CD14-positive monocyte (primary cell): ENCODE measurements at regions of chrX and their contacts with region 1.

Region 1: DNA sequence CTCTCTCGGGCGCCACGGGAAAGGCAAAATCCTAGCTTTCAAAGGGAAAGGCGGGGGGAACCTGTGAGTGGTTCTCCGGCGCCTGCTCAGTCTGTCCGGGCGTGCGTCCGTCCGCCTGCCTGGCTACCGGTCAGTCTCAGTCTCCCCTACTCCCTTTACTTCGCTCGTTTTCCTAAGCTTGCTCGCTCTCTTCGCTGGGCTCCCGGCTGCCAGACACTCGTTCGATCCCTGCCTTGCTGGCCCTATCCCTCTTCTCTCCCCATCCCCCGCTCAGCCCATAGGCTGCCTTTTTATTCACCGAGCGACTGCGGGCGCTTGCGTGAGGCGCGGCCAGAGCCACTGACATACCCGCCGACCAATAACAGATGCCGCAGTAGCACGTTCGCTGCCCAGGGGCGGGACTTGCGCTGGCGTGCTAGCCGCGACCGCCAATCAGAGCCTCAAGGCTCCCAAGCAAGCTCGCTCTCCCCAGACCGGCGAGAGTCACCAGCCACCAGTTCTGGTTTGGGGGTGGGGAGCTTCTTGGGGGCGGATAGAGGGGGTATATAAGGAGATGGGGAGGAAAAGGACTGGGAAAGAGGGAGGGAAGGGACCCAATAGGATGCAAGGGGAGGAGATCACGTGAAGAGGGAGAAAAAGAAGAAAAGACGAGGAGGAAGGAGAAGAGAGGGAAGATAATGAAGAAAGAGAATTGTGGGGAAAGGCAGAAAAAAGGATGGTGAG is 30.0 kb downstream of the ARHGEF9 start:
- DNase-seq: peak; percentile 78 to 85 (median 84)
- H3K4me3 ChIP-seq: peak overlapping the region; percentile 55 to 92 (median 81)
- H3K4me3 Mint-ChIP-seq: peak overlapping the region; percentile 94 to 97
- H3K27ac ChIP-seq: peak overlapping the region; percentile 75 to 84
- H3K27ac Mint-ChIP-seq: peak overlapping the region; percentile 87 to 96 (median 92)
- H3K4me1 ChIP-seq: peaks cover 9 to 11% of the 10 kb centered on the region in 2 donors
- H3K4me1 Mint-ChIP-seq: peaks cover 21% of the 10 kb centered on the region
- H3K27me3 ChIP-seq: no peaks in the 10 kb centered on the region
- H3K27me3 Mint-ChIP-seq: peaks cover 0 to 5% (median 0%) of the 10 kb centered on the region in 3 donors
- CTCF ChIP-seq: no peak

Region 2: GRCh38 chrX:64205735-64206491 is 450.9 kb after region 1 on chrX:
- intact Hi-C with region 1: loop called in 1 of 2 experiments (anchors 10 kb)
- DNase-seq: peak; percentile 81 to 84 (median 84)
- H3K4me3 ChIP-seq: peak overlapping the region; percentile 57 to 80 (median 76)
- H3K4me3 Mint-ChIP-seq: peak overlapping the region; percentile 88 to 90
- H3K27ac ChIP-seq: peak overlapping the region; percentile 85 to 95
- H3K27ac Mint-ChIP-seq: peak overlapping the region; percentile 81 to 95 (median 93)
- H3K4me1 ChIP-seq: peaks cover 17 to 18% of the 10 kb centered on the region in 2 donors
- H3K4me1 Mint-ChIP-seq: peaks cover 20% of the 10 kb centered on the region
- H3K27me3 ChIP-seq: no peaks in the 10 kb centered on the region
- H3K27me3 Mint-ChIP-seq: peaks cover 0 to 6% (median 2%) of the 10 kb centered on the region in 3 donors
- CTCF ChIP-seq: no peak

Region 3: GRCh38 chrX:65534450-65535292 is 1779.7 kb after region 1 on chrX and contains the start of gene LAS1L:
- intact Hi-C with region 1: loop called in 1 of 2 experiments (anchors 10 kb)
- DNase-seq: peak; percentile 90 to 92 (median 91)
- H3K4me3 ChIP-seq: peak within 1 kb of the TSS; percentile 50 to 84 (median 80)
- H3K4me3 Mint-ChIP-seq: peak within 1 kb of the TSS; percentile 98 to 100
- H3K27ac ChIP-seq: peak within 1 kb of the TSS; percentile 46 to 50
- H3K27ac Mint-ChIP-seq: peak within 1 kb of the TSS; percentile 86 to 93 (median 91)
- H3K4me1 ChIP-seq: peaks cover 13 to 15% of the 10 kb centered on the region in 2 donors
- H3K4me1 Mint-ChIP-seq: peaks cover 13% of the 10 kb centered on the region
- H3K27me3 ChIP-seq: no peaks in the 10 kb centered on the region
- H3K27me3 Mint-ChIP-seq: peaks cover 0 to 18% (median 0%) of the 10 kb centered on the region in 3 donors
- CTCF ChIP-seq: no peak
- polyA plus RNA-seq, gene LAS1L: 15.9 to 17.1 (median 17.1) TPM